Mammary epithelial cell (primary cell): ENCODE measurements at regions of chr6 and their contacts with region 1.

Region 1: DNA sequence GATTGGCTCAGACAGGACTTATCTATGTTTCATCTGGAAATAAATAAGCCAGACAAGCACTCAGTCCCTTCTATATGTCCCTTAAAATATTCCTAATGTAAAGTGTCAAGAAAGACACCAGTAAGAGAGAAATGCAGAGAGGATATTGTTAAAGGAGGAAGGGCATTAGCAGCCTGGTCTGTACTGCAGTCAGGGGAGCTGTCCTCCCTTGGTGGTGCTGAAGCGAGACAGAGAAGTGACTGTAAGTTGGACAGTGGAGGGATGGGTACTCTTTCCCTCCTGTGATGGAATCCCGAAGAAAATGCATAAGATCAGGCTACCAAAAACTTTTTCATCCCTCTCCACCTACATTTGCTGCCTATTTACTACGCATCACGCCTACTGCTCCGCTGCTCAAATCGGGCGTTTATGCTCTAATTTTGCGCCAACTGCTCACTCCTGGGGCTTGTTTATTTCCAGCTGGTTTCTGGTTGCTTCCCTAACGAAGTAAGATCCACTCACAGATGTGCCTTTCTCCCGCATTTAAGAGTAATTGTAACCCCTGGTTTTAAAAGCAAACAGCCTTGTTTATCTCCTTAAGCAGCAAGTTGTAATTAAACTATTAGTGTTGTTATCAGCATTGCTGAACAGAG is 35.2 kb downstream of the PHACTR1 start:
- DNase-seq: peak; percentile 24
- H3K4me3 ChIP-seq: no peak overlapping the region
- H3K27ac ChIP-seq: no peak overlapping the region
- H3K4me1 ChIP-seq: no peaks in the 10 kb centered on the region
- H3K27me3 ChIP-seq: peaks cover 15% of the 10 kb centered on the region
- CTCF ChIP-seq: no peak

Region 2: DNA sequence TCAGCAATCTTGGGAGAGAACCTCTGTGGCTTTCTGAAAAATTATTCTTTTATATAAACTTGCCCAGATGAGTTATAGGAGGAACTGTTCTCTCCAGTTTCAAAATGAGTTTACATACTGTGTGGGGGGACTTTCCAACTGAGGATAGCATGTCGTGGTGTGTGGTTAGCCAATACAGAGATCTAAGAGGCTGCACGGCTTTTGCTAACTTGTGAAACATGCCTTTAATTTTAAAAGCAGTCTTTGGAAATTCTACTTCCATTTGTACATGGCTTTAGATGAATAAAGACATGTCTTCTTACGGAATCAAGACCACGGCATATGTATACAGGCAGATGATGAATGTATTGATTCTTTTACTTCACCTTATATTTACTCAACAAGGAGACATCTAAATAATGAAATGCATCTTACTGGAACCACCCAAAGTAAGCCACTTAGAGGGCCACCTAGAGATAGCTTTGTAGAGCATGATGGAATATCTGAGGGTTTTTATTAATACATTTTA is 699.9 kb before region 1 on chr6:
- CTCF ChIA-PET with region 1: no interaction called
- dilution Hi-C with region 1: no loop called
- in situ Hi-C with region 1: no loop called
- intact Hi-C with region 1: no loop called
- DNase-seq: no peak
- H3K4me3 ChIP-seq: no peak overlapping the region
- H3K27ac ChIP-seq: no peak overlapping the region
- H3K4me1 ChIP-seq: no peaks in the 10 kb centered on the region
- H3K27me3 ChIP-seq: no peaks in the 10 kb centered on the region
- CTCF ChIP-seq: no peak

Region 3: DNA sequence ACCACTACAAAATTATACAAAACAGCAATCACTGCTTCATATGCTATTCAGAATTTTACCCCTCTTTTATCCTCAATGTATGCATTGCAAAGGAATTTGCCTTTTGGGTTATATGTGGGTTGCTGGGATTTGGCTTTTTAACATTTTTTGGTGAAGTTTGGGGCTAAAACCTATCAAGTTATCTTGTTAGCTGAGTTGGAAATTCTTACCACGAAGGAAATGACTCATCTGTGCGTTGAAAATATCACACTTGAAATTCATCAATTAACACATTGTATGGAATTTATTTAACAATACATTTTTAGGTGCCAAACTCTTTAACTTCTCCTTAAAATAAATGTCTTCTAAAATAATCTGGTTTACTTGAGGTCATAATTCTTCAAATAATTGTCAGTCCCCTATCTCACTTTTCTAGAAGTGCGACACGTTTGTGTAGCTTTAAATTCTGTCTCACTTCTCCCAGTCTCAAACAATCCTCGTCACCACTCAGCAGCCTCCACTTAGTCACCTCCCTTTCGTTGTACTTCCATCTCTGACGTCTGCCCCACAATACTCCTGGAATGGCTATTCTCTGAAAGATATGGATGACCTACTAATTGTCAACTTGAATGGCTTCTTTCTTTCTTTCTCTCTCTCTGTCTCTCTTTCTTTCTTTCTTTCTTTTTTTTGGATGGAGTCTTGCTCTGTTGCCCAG is 53.3 kb after region 1 on chr6:
- CTCF ChIA-PET with region 1: no interaction called
- dilution Hi-C with region 1: loop called (anchors 5 kb)
- in situ Hi-C with region 1: no loop called
- intact Hi-C with region 1: no loop called
- DNase-seq: no peak
- H3K4me3 ChIP-seq: no peak overlapping the region
- H3K27ac ChIP-seq: no peak overlapping the region
- H3K4me1 ChIP-seq: no peaks in the 10 kb centered on the region
- H3K27me3 ChIP-seq: no peaks in the 10 kb centered on the region
- CTCF ChIP-seq: no peak